Caco-2 (cell line): ENCODE measurements at regions of chr10 and their contacts with region 1.

Region 1: GRCh38 chr10:133378251-133379096 is 588 bp upstream of the PAOX start:
- DNase-seq: peak; percentile 73 to 78
- H3K4me3 ChIP-seq: peak overlapping the region; percentile 97
- H3K4me3 Mint-ChIP-seq: peak overlapping the region; percentile 81
- H3K27ac Mint-ChIP-seq: peak overlapping the region; percentile 45
- H3K4me1 ChIP-seq: peaks cover 16% of the 10 kb centered on the region
- H3K4me1 Mint-ChIP-seq: no peaks in the 10 kb centered on the region
- H3K27me3 ChIP-seq: no peaks in the 10 kb centered on the region
- H3K27me3 Mint-ChIP-seq: no peaks in the 10 kb centered on the region
- CTCF ChIP-seq: no peak

Region 2: GRCh38 chr10:132571650-132572535 is 806.6 kb before region 1 on chr10:
- CTCF ChIA-PET with region 1: no interaction called
- POLR2A ChIA-PET with region 1: no interaction called
- intact Hi-C with region 1: no loop called
- DNase-seq: peak; percentile 26 to 50
- H3K4me3 ChIP-seq: no peak overlapping the region
- H3K4me3 Mint-ChIP-seq: no peak overlapping the region
- H3K27ac Mint-ChIP-seq: peak overlapping the region; percentile 39
- H3K4me1 ChIP-seq: peaks cover 33% of the 10 kb centered on the region
- H3K4me1 Mint-ChIP-seq: peaks cover 10% of the 10 kb centered on the region
- H3K27me3 ChIP-seq: no peaks in the 10 kb centered on the region
- H3K27me3 Mint-ChIP-seq: no peaks in the 10 kb centered on the region
- CTCF ChIP-seq: no peak

Region 3: GRCh38 chr10:133394064-133394663 is 15.7 kb after region 1 on chr10 and contains the start of gene MTG1:
- CTCF ChIA-PET with region 1: interaction called, 6 read pairs
- POLR2A ChIA-PET with region 1: interaction called, 5 read pairs
- intact Hi-C with region 1: loop called (anchors 1 kb)
- DNase-seq: peak; percentile 95 to 100
- H3K4me3 ChIP-seq: peak within 1 kb of the TSS; percentile 79
- H3K4me3 Mint-ChIP-seq: peak within 1 kb of the TSS; percentile 81
- H3K27ac Mint-ChIP-seq: peak within 1 kb of the TSS; percentile 86
- H3K4me1 ChIP-seq: 0 out of 2 replicates have a peak, but pooled peaks cover 4% of the 10 kb centered on the region
- H3K4me1 Mint-ChIP-seq: no peaks in the 10 kb centered on the region
- H3K27me3 ChIP-seq: no peaks in the 10 kb centered on the region
- H3K27me3 Mint-ChIP-seq: no peaks in the 10 kb centered on the region
- CTCF ChIP-seq: peak in 1 of 2 experiments; percentile 54
- total RNA-seq, gene MTG1: 111 and 113 TPM in 2 replicates